ENCODE measurements at regions of chr19 and their contacts with region 1.

Region 1: DNA sequence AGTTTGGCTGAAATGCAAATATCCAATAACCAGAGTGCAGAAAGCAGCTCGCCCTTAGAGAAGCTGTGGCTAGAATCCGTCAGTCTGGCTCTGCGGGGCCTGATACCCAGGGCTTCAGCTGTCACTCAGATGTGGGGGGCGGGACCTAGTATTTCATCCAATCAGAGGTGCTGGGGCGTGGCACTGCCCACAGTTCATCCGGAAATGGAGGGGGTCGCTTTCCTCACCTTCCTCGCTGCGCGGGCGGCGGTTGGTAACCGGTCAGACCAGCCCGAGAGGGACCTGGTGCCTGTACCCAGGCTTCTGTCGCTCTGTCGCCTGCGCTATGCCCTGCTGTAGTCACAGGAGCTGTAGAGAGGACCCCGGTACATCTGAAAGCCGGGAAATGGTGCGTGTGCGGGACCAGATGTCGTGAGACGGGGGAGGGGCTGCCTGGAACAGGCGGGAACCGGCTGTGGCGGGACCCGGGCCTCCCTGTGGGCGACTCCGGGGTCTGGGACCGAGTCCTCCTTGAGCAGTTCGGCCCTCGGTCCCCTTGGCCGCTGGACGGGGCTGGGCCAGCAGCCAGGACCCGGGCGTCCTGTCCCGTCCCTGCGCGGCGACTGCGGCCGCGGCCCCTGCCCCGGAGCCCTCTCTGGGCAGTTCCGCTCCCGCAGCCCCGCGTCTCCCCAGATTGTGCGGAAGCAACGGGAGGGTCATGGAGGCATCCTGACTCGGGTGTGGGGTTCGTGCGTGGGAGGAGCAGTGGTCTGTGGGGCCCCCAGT is at the start of gene ZNF700:
- DNase-seq: peak; percentile 95
- H3K4me3 Mint-ChIP-seq: peak within 1 kb of the TSS; percentile 95
- H3K27ac Mint-ChIP-seq: peak within 1 kb of the TSS; percentile 98
- H3K4me1 Mint-ChIP-seq: peaks cover 37% of the 10 kb centered on the region
- H3K27me3 Mint-ChIP-seq: no peaks in the 10 kb centered on the region
- total RNA-seq, gene ZNF700: 19.1 to 20.4 TPM

Region 2: DNA sequence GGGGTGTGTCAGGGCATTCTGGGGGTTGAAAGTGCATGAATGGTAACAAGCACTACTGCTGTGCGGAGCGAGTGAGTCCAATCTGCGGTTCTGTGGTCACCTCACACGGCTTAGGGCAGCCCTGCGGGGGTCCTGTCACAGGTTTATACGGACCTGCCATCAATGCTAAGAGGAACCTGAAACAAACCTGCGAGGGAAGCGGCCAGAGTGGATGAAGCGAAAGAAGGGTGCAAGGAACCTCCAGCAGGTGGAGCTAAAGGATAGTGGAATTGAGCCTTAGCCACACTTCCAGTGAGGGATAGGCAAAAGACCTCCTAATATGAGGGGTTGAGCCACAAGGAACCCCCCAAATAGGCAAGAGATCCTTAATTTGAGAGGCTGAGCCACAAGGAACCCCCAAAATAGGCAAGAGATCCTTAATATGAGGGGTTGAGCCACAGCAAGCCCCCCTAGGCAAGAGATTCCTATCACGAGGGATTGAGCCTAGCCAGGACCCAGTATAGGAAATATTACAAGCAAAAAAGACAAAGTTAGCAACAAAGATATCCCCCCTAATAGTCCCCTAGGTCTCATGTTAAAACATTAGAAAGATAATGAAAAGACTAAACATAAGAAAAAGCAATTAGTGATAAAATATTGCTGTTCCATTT is 43.8 kb before region 1 on chr19:
- CTCF ChIA-PET with region 1: interaction called, 13 read pairs
- POLR2A ChIA-PET with region 1: no interaction called
- DNase-seq: peak; percentile 68
- H3K4me3 Mint-ChIP-seq: no peak overlapping the region
- H3K27ac Mint-ChIP-seq: no peak overlapping the region
- H3K4me1 Mint-ChIP-seq: peaks cover 2% of the 10 kb centered on the region
- H3K27me3 Mint-ChIP-seq: no peaks in the 10 kb centered on the region

Region 3: GRCh38 chr19:11964858-11965645 is 40.0 kb after region 1 on chr19 and contains the start of gene ZNF763:
- CTCF ChIA-PET with region 1: interaction called, 21 read pairs
- POLR2A ChIA-PET with region 1: interaction called, 19 read pairs
- DNase-seq: peak; percentile 91
- H3K4me3 Mint-ChIP-seq: peak within 1 kb of the TSS; percentile 85
- H3K27ac Mint-ChIP-seq: peak within 1 kb of the TSS; percentile 75
- H3K4me1 Mint-ChIP-seq: peaks cover 22% of the 10 kb centered on the region
- H3K27me3 Mint-ChIP-seq: no peaks in the 10 kb centered on the region
- total RNA-seq, gene ZNF763: 1.4 to 2.2 TPM

Region 4: DNA sequence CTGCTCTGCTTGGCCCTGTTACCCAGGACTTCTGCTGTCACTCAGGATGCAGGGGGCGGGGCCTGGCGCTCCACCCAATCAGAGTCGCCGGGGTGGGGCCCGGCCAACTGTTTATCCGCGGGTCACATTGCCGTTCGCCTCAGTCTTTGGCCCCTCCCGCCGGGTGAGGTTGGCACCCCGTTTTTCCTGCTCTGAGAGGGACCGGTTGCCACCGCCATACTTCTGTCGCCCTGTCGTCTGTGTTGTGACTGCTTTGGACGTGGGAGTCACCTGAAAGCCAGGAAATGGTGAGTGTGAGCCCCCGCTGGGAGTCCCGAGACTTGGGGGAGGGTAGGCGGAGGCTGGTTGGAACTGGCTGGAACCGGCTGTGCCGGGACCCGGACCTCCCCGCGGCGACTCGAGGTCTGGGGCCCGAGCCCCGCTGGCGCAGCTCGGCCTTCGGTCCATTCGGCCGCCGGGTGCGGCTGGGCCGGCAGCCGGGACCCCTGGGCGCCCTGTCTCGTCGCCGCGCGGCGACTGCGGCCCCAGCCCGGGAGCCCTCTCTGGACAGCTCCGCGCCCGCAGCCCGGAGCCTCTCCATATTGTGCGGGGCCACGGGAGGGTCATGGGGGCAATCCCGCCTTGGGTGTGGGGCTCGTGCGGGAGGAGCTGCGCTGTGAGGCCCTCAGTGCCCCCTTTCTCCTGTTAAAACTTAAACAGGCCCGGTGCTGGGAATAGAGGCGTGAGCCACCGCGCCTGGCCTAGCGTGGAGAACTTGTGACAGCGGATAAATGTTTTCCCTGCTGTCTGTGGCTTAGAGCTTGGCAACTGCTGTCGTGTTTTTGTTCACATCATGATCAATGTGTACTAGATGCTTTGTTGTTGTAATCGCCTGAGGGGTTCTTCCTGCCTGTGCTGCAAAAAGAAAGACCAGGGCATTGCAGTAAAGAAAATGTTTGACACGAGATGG is 139.8 kb after region 1 on chr19 and contains the start of gene ZNF844:
- CTCF ChIA-PET with region 1: interaction called, 12 read pairs
- POLR2A ChIA-PET with region 1: interaction called, 3 read pairs
- DNase-seq: peak; percentile 59
- H3K4me3 Mint-ChIP-seq: peak within 1 kb of the TSS; percentile 65
- H3K27ac Mint-ChIP-seq: no peak within 1 kb of the TSS
- H3K4me1 Mint-ChIP-seq: peaks cover 4% of the 10 kb centered on the region
- H3K27me3 Mint-ChIP-seq: no peaks in the 10 kb centered on the region
- total RNA-seq, gene ZNF844: 1.4 to 1.6 TPM

Region 5: DNA sequence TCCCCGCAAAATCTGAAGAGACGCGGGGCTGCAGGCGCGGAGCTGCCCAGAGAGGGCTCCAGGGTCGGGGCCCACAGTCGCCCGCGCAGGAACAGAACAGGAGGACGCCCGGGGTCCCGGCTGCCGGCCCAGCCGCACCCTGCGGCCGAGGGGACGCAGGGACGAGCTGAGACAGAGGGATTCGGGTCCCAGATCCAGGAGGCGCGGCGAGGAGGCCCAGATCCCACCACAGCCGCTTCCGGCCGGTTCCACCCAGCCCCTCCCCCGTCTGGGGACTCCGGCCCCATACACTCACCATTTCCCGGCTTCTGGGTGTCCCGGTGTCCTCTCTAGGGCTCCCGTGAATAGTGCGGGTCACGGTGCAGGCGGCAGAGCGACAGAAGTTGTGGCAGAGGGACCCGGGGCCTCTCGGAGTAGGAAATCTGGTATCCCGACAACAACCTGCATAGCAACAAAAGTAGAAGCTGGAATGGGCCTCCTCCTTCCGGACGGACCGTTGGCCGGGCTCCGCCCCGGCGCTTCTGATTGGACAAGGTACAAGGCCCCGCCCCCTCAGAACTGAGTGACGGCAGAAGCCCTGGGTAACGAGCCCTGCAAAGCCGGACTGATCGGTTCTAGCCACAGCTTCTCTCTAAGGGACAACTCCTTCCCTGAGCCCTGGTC is 214.9 kb after region 1 on chr19 and contains the start of gene ZNF20:
- CTCF ChIA-PET with region 1: interaction called, 43 read pairs
- POLR2A ChIA-PET with region 1: interaction called, 18 read pairs
- DNase-seq: peak; percentile 92
- H3K4me3 Mint-ChIP-seq: peak within 1 kb of the TSS; percentile 92
- H3K27ac Mint-ChIP-seq: peak within 1 kb of the TSS; percentile 75
- H3K4me1 Mint-ChIP-seq: peaks cover 31% of the 10 kb centered on the region
- H3K27me3 Mint-ChIP-seq: no peaks in the 10 kb centered on the region
- total RNA-seq, gene ZNF20: 5.3 to 5.8 TPM

Region 6: GRCh38 chr19:12333162-12334159 is 408.4 kb after region 1 on chr19 and contains the start of gene ZNF563:
- CTCF ChIA-PET with region 1: no interaction called
- POLR2A ChIA-PET with region 1: interaction called, 11 read pairs
- DNase-seq: peak; percentile 98
- H3K4me3 Mint-ChIP-seq: peak within 1 kb of the TSS; percentile 82
- H3K27ac Mint-ChIP-seq: peak within 1 kb of the TSS; percentile 97
- H3K4me1 Mint-ChIP-seq: peaks cover 31% of the 10 kb centered on the region
- H3K27me3 Mint-ChIP-seq: no peaks in the 10 kb centered on the region
- total RNA-seq, gene ZNF563: 4.0 to 4.5 TPM